WTC11 (cell line): ENCODE measurements at regions of chr1 and their contacts with region 1.

Region 1: DNA sequence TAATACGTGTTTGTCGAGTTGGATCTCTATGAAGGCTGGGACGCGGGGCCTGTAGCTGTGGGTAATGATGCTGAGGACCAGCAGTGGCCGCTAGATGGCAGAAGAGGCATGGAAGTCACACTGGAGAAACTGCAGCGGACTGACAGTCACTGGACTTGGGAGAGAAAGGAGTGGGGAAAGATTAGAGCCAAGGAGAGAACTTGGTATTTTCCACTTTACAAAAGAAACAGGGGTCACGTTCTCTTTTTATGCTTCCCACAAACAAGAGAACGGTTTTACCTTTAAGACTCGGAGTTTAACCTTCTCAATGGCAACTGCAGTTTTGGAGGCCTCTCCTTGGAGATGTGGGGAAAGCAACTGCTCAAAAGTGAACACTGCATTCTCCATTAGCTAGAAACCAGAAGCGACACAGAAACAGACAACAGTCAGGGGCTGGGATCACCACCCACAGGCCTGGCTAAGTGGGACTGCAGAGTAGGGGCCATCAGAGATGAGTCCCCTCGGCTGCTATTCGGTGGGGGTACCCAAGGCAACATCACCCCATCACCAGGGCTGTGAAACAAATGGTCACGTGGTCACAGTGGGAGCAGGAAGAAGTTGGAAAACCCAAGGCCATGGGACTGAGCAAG is 51.1 kb upstream of the EDEM3 start:
- DNase-seq: peak; percentile 86
- ATAC-seq: peak; percentile 98
- H3K4me3 Mint-ChIP-seq: no peak overlapping the region
- H3K27ac Mint-ChIP-seq: no peak overlapping the region
- H3K4me1 Mint-ChIP-seq: peaks cover 3% of the 10 kb centered on the region; the same call in 1 of the 2 replicates
- H3K27me3 Mint-ChIP-seq: no peaks in the 10 kb centered on the region
- CTCF ChIP-seq: peak; percentile 80

Region 2: GRCh38 chr1:184828369-184828717 is 22.6 kb after region 1 on chr1:
- CTCF ChIA-PET with region 1: no interaction called
- POLR2A ChIA-PET with region 1: no interaction called
- DNase-seq: no peak
- ATAC-seq: no peak
- H3K4me3 Mint-ChIP-seq: no peak overlapping the region
- H3K27ac Mint-ChIP-seq: no peak overlapping the region
- H3K4me1 Mint-ChIP-seq: peaks cover 7% of the 10 kb centered on the region
- H3K27me3 Mint-ChIP-seq: no peaks in the 10 kb centered on the region
- CTCF ChIP-seq: no peak

Region 3: DNA sequence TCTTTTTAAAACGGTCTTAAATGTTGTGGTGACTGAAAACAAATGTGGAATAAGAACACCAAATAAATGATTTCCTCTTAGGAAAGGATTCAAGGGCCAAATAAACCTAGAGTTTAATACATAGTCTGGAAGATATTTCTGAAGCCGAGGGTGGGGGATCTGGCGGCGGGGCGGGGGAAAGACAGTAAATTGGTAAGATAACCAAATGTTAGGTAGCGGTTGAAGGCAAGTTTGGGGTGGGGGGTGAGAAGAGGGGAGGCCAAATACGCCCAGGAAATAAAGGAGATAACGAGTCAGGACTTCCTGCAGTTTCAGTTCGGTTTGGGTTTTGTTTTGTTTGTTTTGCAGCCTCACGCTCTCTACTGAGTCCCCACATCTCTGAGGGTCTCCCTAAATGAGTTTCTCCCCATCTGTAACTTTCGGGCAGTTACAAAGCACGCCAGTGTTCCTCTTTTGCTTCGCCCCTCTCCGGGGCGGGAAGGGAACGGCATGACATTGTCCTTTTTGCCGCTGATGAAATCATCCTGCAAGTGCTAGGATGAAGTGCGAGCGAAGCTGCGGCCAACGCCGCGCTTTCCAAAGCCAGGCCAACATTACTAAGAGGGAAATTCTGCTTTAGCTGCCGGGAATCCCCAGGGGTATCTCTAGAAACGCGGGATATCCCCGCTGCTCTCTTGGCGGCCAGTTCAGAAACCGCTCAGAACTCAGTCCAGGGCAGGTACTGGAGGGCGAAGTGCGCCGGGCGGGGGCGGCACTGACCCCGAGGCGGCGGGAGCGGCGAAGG is 167.7 kb after region 1 on chr1:
- CTCF ChIA-PET with region 1: interaction called, 16 read pairs
- POLR2A ChIA-PET with region 1: interaction called, 3 read pairs
- DNase-seq: peak; percentile 55
- ATAC-seq: peak; percentile 82
- H3K4me3 Mint-ChIP-seq: peak overlapping the region; percentile 91
- H3K27ac Mint-ChIP-seq: no peak overlapping the region
- H3K4me1 Mint-ChIP-seq: peaks cover 8% of the 10 kb centered on the region
- H3K27me3 Mint-ChIP-seq: peaks cover 59% of the 10 kb centered on the region
- CTCF ChIP-seq: no peak

Region 4: GRCh38 chr1:184982002-184982954 is 176.5 kb after region 1 on chr1:
- CTCF ChIA-PET with region 1: interaction called, 22 read pairs
- POLR2A ChIA-PET with region 1: no interaction called
- DNase-seq: peak; percentile 76
- ATAC-seq: peak; percentile 97
- H3K4me3 Mint-ChIP-seq: no peak overlapping the region
- H3K27ac Mint-ChIP-seq: no peak overlapping the region
- H3K4me1 Mint-ChIP-seq: 0 out of 2 replicates have a peak, but pooled peaks cover 5% of the 10 kb centered on the region
- H3K27me3 Mint-ChIP-seq: peaks cover under 1% of the 10 kb centered on the region
- CTCF ChIP-seq: peak; percentile 62

Region 5: DNA sequence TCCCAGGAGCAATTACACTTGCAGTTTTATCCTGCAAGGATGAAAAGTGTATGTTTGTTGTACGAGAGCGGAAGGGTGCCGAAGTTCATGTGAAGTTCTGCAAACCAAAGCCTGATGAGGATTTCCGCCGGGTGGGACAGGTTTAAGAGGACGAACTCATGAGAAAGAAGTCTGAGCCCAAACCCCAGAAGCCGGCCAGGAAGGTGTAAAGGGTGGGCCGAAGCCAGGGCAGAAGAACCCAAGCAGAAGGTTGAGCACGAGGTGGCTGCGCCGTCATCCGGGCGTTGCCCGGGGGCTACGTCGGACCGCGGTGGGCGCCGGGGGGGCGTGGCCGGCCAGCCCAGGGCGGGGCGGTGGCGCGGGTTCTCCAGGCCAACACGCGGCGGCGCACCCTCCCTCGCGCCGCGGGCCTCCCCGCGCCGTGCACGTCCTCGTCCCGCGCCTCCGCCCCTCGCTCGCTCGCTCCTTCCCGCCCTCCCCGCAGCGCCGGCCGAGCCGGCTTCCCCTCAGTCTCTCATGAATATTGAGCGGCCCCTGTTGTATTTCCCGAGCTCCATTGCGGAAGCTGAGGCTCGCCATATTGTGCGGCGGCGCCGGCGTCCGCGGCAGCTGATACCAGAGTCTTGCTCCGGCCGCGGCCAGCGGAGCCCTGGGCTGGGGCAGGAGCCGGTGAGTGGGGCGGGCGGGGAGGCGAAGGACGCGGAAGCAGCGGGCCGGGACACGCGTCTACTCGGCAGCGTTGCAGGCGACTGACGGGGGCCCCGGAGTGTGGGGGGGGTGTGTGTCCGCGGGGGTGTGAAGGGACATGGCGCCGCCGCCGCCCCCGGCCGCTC is 239.4 kb after region 1 on chr1 and contains the start of gene RNF2:
- CTCF ChIA-PET with region 1: interaction called, 11 read pairs
- POLR2A ChIA-PET with region 1: no interaction called
- DNase-seq: peak; percentile 86
- ATAC-seq: peak; percentile 88
- H3K4me3 Mint-ChIP-seq: peak within 1 kb of the TSS; percentile 93
- H3K27ac Mint-ChIP-seq: peak within 1 kb of the TSS; percentile 90
- H3K4me1 Mint-ChIP-seq: peaks cover 46% of the 10 kb centered on the region
- H3K27me3 Mint-ChIP-seq: peaks cover 27% of the 10 kb centered on the region
- CTCF ChIP-seq: no peak
- total RNA-seq, gene RNF2: 37.3 to 47.8 TPM (median 45.2 TPM) in 3 replicates

Region 6: GRCh38 chr1:185170291-185170848 is 364.6 kb after region 1 on chr1:
- CTCF ChIA-PET with region 1: interaction called, 35 read pairs
- POLR2A ChIA-PET with region 1: no interaction called
- DNase-seq: peak; percentile 48
- ATAC-seq: peak; percentile 94
- H3K4me3 Mint-ChIP-seq: peak overlapping the region; percentile 42
- H3K27ac Mint-ChIP-seq: no peak overlapping the region
- H3K4me1 Mint-ChIP-seq: no peaks in the 10 kb centered on the region
- H3K27me3 Mint-ChIP-seq: no peaks in the 10 kb centered on the region
- CTCF ChIP-seq: 0 out of 2 replicates have a peak, but pooled peaks have one; percentile 23